ENCODE measurements at regions of chr2 and their contacts with region 1.

Region 1: GRCh38 chr2:57701391-57701815 is 345.2 kb upstream of the VRK2 start:
- DNase-seq: no peak
- H3K4me3 Mint-ChIP-seq: peak overlapping the region; percentile 19
- H3K27ac Mint-ChIP-seq: peak overlapping the region; percentile 24
- H3K4me1 Mint-ChIP-seq: peaks cover 23% of the 10 kb centered on the region
- H3K27me3 Mint-ChIP-seq: no peaks in the 10 kb centered on the region
- CTCF ChIP-seq: no peak

Region 2: GRCh38 chr2:57376985-57377384 is 324.4 kb before region 1 on chr2:
- CTCF ChIA-PET with region 1: no interaction called
- intact Hi-C with region 1: loop called (anchors 10 kb)
- DNase-seq: no peak
- H3K4me3 Mint-ChIP-seq: no peak overlapping the region
- H3K27ac Mint-ChIP-seq: no peak overlapping the region
- H3K4me1 Mint-ChIP-seq: peaks cover 28% of the 10 kb centered on the region
- H3K27me3 Mint-ChIP-seq: no peaks in the 10 kb centered on the region
- CTCF ChIP-seq: no peak

Region 3: DNA sequence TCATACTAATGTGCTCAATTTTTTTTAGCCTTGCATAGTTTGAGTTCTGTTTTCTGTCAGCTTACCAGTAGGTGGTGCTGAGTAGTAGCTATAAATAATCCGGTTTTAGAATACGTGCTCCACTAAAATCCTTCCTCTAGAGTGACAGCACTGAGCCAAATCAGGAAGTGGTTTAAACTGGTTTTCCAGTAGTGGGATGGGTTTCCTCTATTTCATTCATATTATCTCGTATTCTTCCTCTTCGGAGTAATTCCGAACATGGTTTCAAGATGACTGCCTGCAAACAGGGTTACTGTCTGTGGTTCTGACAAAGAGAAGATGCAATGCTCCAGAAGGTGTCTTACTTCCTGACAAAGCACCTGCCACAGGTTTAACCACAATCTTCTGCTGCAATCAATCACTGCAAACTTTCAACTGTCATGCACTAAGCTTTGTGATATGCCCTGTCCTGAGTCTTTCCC is 151.7 kb before region 1 on chr2:
- CTCF ChIA-PET with region 1: interaction called, 8 read pairs
- intact Hi-C with region 1: loop called (anchors 1 kb)
- DNase-seq: peak; percentile 14
- H3K4me3 Mint-ChIP-seq: no peak overlapping the region
- H3K27ac Mint-ChIP-seq: no peak overlapping the region
- H3K4me1 Mint-ChIP-seq: peaks cover 35% of the 10 kb centered on the region
- H3K27me3 Mint-ChIP-seq: no peaks in the 10 kb centered on the region
- CTCF ChIP-seq: peak; percentile 54

Region 4: GRCh38 chr2:57990118-57990725 is 288.8 kb after region 1 on chr2:
- CTCF ChIA-PET with region 1: no interaction called
- intact Hi-C with region 1: no loop called
- DNase-seq: no peak
- H3K4me3 Mint-ChIP-seq: no peak overlapping the region
- H3K27ac Mint-ChIP-seq: no peak overlapping the region
- H3K4me1 Mint-ChIP-seq: no peaks in the 10 kb centered on the region
- H3K27me3 Mint-ChIP-seq: no peaks in the 10 kb centered on the region
- CTCF ChIP-seq: no peak